ENCODE measurements at regions of chr17 and their contacts with region 1.

Region 1: DNA sequence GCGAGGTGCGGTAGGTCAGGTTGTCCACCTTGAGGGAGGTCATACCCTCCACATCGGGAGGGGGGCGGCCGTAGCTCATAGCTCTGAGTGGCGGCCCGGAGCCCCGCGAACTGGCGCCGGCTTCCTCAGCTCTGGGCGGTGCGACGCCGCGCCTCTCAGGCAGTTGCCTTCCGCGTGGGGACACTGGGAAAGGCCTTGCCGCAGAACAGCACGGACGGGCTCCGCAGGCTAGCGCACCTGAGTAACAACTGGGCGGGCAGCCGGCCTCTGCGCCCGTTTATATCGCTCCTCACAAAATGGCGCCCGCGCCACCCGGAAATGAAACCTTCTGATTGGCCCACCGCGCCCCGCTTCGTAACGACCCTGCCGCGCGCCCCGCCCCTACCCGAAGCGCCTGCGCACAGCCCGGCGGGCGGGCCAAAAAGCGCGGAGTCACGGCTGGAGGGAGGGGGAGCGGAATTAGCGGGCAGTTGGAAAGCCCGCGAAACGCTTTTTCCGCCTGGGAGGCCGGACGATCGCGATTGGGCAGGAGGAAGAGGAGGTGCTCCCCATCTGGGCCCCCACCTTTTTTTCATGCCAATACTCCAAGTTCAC is at the start of gene SRSF2:
- DNase-seq: peak; percentile 98 to 100 (median 99)
- ATAC-seq: peak; percentile 86
- H3K4me3 ChIP-seq: peak within 1 kb of the TSS; percentile 97
- H3K4me3 Mint-ChIP-seq: peak within 1 kb of the TSS; percentile 90 to 99 (median 97)
- H3K27ac ChIP-seq: peak within 1 kb of the TSS; percentile 96
- H3K27ac Mint-ChIP-seq: peak within 1 kb of the TSS; percentile 95 to 100 (median 99)
- H3K4me1 ChIP-seq: peaks cover 45 to 49% of the 10 kb centered on the region in 2 donors
- H3K4me1 Mint-ChIP-seq: peaks cover 26 to 66% (median 58%) of the 10 kb centered on the region in 7 donors
- H3K27me3 ChIP-seq: no peaks in the 10 kb centered on the region
- H3K27me3 Mint-ChIP-seq: no peaks in the 10 kb centered on the region
- total RNA-seq, gene SRSF2: 327 to 363 (median 351) TPM

Region 2: DNA sequence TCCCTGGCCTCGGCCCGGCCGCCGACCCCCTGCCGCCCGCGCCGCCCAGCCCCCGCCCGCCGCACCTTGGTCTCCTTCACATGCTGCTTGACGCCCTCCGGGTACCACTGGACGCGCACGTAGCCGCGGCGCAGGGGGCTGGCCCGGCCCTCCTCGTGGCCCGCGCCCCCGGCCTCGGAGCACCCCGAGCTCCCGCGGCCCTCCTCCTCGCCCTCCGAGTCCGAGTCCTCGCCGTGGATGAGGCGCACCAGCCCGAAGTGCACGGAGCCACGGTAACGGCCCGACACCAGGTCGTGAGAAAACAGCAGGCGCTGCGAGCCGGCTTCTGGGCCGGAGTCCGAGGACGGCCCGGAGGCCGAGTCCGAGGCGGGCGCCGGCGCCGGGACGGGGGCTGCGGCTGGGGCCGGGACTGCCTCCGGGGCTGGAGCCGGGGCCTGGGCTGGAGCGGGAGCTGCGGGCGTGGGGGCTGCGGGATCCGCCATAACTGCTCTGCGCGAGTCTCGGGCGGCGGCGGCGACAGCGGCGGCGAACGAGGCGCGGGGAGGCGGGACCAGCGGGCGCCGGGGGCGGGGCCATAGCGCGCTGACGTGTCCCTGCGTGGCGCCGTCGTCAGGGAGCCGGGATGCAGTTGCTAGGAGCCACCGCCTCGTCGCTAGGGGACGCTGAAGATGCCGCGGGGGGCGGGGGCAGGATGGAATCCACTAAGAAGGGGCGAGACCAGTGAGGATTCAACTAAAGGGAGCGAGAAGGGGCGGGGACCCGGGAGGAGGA is 284.3 kb before region 1 on chr17 and contains the start of gene UBE2O:
- CTCF ChIA-PET with region 1: no interaction called
- POLR2A ChIA-PET with region 1: no interaction called
- intact Hi-C with region 1: loop called in 1 of 2 experiments (anchors 5 kb)
- DNase-seq: peak; percentile 92 to 97 (median 95)
- ATAC-seq: peak; percentile 97
- H3K4me3 ChIP-seq: peak within 1 kb of the TSS; percentile 73
- H3K4me3 Mint-ChIP-seq: peak within 1 kb of the TSS; percentile 86 to 95 (median 88)
- H3K27ac ChIP-seq: peak within 1 kb of the TSS; percentile 89
- H3K27ac Mint-ChIP-seq: peak within 1 kb of the TSS; percentile 81 to 98 (median 93)
- H3K4me1 ChIP-seq: peaks cover 11 to 23% of the 10 kb centered on the region in 2 donors
- H3K4me1 Mint-ChIP-seq: peaks cover 17 to 46% (median 42%) of the 10 kb centered on the region in 7 donors
- H3K27me3 ChIP-seq: no peaks in the 10 kb centered on the region
- H3K27me3 Mint-ChIP-seq: no peaks in the 10 kb centered on the region
- total RNA-seq, gene UBE2O: 32.6 to 50.8 (median 41.6) TPM

Region 3: GRCh38 chr17:76466775-76467130 is 270.4 kb before region 1 on chr17:
- CTCF ChIA-PET with region 1: no interaction called
- POLR2A ChIA-PET with region 1: no interaction called
- intact Hi-C with region 1: no loop called
- DNase-seq: no peak
- ATAC-seq: no peak
- H3K4me3 ChIP-seq: no peak overlapping the region
- H3K4me3 Mint-ChIP-seq: no peak overlapping the region
- H3K27ac ChIP-seq: no peak overlapping the region
- H3K27ac Mint-ChIP-seq: no peak overlapping the region
- H3K4me1 ChIP-seq: no peaks in the 10 kb centered on the region
- H3K4me1 Mint-ChIP-seq: peaks cover 0 to 9% (median 4%) of the 10 kb centered on the region in 7 donors
- H3K27me3 ChIP-seq: no peaks in the 10 kb centered on the region
- H3K27me3 Mint-ChIP-seq: peaks cover 0 to 7% (median 0%) of the 10 kb centered on the region in 5 donors

Region 4: GRCh38 chr17:76611749-76612512 is 125.2 kb before region 1 on chr17:
- CTCF ChIA-PET with region 1: no interaction called
- POLR2A ChIA-PET with region 1: no interaction called
- intact Hi-C with region 1: no loop called
- DNase-seq: no peak
- ATAC-seq: no peak
- H3K4me3 ChIP-seq: no peak overlapping the region
- H3K4me3 Mint-ChIP-seq: no peak overlapping the region
- H3K27ac ChIP-seq: no peak overlapping the region
- H3K27ac Mint-ChIP-seq: no peak overlapping the region
- H3K4me1 ChIP-seq: no peaks in the 10 kb centered on the region
- H3K4me1 Mint-ChIP-seq: peaks cover 0 to 4% (median 0%) of the 10 kb centered on the region in 7 donors
- H3K27me3 ChIP-seq: no peaks in the 10 kb centered on the region
- H3K27me3 Mint-ChIP-seq: peaks cover 0 to 4% (median 0%) of the 10 kb centered on the region in 5 donors

Region 5: DNA sequence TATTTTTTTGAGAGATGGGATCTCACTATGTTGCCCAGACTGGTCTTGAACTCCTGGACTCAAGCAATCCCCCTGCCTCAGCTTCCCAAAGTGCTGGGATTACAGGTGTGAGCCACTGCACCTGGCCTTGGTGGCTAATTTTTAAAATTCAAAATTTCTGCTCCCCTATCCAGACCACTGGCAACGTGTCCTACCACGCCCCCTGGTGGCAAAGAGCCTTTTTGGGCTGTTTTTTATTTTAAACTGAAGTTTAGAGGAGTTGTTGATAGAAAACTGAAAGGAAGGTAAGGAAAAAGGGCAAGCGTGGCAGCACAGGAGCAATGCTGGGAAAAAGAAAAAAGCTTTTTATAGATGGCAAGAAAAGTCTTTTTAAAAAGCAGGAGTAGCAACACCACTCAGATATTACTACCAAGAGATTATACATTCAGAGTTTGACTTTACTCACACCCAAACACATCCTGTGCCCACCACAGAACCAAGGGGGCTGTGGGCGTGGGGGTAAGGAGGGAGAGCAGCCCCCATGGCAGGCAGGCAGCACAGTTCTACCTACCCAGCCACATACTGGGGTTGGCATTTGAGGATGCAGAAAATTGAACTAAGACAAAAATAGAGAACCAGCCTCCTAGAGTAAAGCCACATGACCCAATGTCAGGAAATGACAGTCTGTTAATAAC is 22.2 kb before region 1 on chr17:
- CTCF ChIA-PET with region 1: interaction called, 10 read pairs
- POLR2A ChIA-PET with region 1: interaction called, 16 read pairs
- intact Hi-C with region 1: loop called in 1 of 2 experiments (anchors 1 kb)
- DNase-seq: peak; percentile 60 to 83 (median 70)
- ATAC-seq: peak; percentile 18
- H3K4me3 ChIP-seq: no peak overlapping the region
- H3K4me3 Mint-ChIP-seq: peak overlapping the region in 5 of 10 donors; percentile 1 to 41 (median 2)
- H3K27ac ChIP-seq: peak overlapping the region; percentile 32
- H3K27ac Mint-ChIP-seq: peak overlapping the region; percentile 22 to 82 (median 75)
- H3K4me1 ChIP-seq: peaks cover 14 to 30% of the 10 kb centered on the region in 2 donors
- H3K4me1 Mint-ChIP-seq: peaks cover 27 to 48% (median 41%) of the 10 kb centered on the region in 7 donors
- H3K27me3 ChIP-seq: no peaks in the 10 kb centered on the region
- H3K27me3 Mint-ChIP-seq: peaks cover 0 to 2% (median 0%) of the 10 kb centered on the region in 5 donors

Region 6: GRCh38 chr17:76772842-76773525 is 35.8 kb after region 1 on chr17:
- CTCF ChIA-PET with region 1: interaction called, 3 read pairs
- POLR2A ChIA-PET with region 1: interaction called, 4 read pairs
- intact Hi-C with region 1: loop called in 1 of 2 experiments (anchors 2 kb)
- DNase-seq: peak in 6 of 9 donors; percentile 2 to 33 (median 22)
- ATAC-seq: peak; percentile 94
- H3K4me3 ChIP-seq: peak overlapping the region; percentile 36
- H3K4me3 Mint-ChIP-seq: peak overlapping the region in 9 of 10 donors; percentile 30 to 82 (median 48)
- H3K27ac ChIP-seq: no peak overlapping the region
- H3K27ac Mint-ChIP-seq: peak overlapping the region; percentile 67 to 92 (median 82)
- H3K4me1 ChIP-seq: peaks cover 11 to 13% of the 10 kb centered on the region in 2 donors
- H3K4me1 Mint-ChIP-seq: peaks cover 15 to 25% (median 23%) of the 10 kb centered on the region in 7 donors
- H3K27me3 ChIP-seq: no peaks in the 10 kb centered on the region
- H3K27me3 Mint-ChIP-seq: no peaks in the 10 kb centered on the region

Region 7: DNA sequence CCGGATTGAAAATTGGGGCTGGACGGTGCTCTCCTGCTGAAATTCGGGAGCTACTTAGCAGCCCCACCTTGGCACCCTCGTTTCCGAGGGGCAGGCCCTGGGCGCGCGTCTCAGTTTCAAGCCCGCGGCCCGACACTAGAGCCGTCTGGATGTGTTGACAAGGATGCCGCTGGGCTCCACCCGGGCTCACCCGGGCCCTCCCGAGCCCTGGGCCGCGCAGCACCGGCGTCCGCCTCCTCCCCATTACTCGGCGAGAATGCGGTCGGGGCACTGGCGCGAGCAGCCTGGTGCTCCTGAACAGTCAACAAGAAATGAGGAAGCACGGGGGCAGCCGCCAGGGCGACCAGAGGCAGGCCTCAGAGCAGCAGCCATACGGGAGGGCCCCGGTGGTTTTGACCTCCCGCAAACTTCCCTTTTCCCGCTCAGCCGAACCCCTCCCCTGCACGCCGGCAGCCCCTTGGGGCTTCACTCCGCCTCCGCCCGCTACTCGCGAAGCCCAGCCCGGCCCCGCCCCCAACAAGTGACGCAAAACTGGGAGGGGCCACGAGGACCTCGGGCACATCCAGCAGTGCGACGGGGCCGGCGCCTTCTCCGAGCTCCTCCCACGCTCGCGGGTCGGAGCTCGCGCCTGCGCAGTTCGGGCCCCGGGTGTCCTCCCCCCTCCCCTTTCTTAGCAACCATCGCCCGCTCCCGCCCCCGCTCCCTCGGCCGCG is 403.1 kb after region 1 on chr17:
- CTCF ChIA-PET with region 1: no interaction called
- POLR2A ChIA-PET with region 1: interaction called, 6 read pairs
- intact Hi-C with region 1: loop called (anchors 1 kb)
- DNase-seq: peak; percentile 98 to 100 (median 99)
- ATAC-seq: peak; percentile 96
- H3K4me3 ChIP-seq: peak overlapping the region; percentile 74
- H3K4me3 Mint-ChIP-seq: peak overlapping the region; percentile 65 to 87 (median 80)
- H3K27ac ChIP-seq: peak overlapping the region; percentile 88
- H3K27ac Mint-ChIP-seq: peak overlapping the region; percentile 75 to 93 (median 90)
- H3K4me1 ChIP-seq: peaks cover 14 to 28% of the 10 kb centered on the region in 2 donors
- H3K4me1 Mint-ChIP-seq: peaks cover 32 to 73% (median 66%) of the 10 kb centered on the region in 7 donors
- H3K27me3 ChIP-seq: no peaks in the 10 kb centered on the region
- H3K27me3 Mint-ChIP-seq: no peaks in the 10 kb centered on the region